ENCODE measurements at regions of chr16 and their contacts with region 1.

Region 1: DNA sequence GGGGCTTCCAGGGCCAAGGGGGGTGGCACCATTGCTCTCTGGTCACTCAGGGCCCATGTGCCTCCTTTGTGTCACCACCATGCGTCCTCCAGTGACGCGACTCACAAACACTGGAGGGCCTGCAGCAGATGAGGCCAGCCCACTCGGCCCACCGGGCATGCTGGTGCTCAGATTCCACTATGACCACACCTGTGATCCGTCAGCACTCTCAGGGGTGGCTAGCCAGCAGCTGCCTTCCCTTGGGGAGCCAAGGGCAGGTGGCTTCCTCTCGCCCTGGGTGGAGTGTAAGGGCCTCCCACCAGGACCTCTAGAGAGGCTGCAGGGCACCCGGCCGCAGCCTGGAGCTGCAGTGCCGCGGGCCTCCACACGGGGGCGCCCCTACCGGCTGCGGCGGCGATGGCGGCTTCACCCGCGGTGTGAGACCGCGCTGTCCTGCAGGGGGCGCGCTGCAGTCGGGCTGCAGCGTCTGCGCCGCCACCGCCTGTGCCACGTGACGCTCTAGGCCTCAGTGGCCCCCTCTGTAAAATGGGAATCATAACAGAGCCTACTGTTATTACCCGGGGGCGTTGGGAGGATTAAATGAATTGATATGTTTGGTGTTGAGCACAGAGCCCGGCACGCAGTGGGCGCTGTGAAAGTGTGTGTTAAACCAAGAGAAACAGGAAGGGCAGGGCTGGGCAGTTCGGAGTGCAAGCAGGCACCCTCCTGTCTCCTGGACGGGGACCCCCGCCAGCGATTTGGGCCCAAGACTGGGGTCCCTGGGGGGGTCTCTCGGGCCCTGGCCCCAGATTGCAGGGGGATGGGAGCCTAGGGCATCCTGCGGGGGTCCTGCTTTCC is 192.4 kb upstream of the GSE1 start:
- DNase-seq: peak; percentile 71 to 85
- ATAC-seq: peak; percentile 68 to 80 (median 78)
- H3K4me3 ChIP-seq: no peak overlapping the region
- H3K27ac ChIP-seq: no peak overlapping the region
- H3K4me1 ChIP-seq: peaks cover 6% of the 10 kb centered on the region
- H3K27me3 ChIP-seq: no peaks in the 10 kb centered on the region
- CTCF ChIP-seq: peak; percentile 99

Region 2: DNA sequence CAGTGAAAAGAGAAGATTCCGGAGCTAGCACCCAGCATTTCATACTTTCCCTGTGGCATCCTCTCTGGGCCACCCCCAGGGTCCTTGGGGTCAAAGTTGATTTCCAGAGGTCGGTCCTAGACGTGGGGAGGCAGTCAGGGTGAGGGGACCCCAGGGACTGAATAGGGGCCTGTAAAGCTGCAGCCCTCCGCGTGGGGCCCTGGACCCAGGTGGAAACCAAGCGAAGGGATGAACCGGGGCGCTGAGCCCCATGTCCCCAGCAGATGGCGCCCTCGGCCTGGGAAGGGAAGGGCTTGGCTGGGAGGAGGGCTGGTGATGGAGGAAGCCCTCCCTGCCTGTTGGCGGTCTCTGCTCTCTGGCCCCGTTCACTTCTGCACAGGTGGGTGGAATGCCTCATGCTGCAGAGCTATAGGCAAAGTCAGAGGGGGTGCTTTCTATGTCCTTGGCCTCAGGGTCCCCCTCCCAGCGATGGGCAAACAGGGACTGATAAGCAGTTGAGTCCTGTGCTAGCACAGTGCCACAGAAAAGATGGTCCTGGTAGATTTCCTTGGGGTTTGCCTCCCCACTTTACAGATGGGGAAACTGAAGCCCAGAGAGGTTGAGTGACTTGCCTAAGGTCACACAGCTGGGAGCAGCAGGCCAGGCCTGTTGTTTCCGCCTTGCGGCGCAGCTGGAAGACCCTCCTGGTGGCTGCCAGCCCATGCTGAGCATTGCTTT is 145.0 kb before region 1 on chr16:
- intact Hi-C with region 1: loop called in 1 of 2 experiments (anchors 10 kb)
- DNase-seq: peak; percentile 76 to 87
- ATAC-seq: peak; percentile 77 to 88 (median 78)
- H3K4me3 ChIP-seq: no peak overlapping the region
- H3K27ac ChIP-seq: no peak overlapping the region
- H3K4me1 ChIP-seq: peaks cover 21% of the 10 kb centered on the region
- H3K27me3 ChIP-seq: no peaks in the 10 kb centered on the region
- CTCF ChIP-seq: peak; percentile 89

Region 3: GRCh38 chr16:85465968-85466700 is 45.4 kb after region 1 on chr16:
- intact Hi-C with region 1: loop called (anchors 5 kb)
- DNase-seq: peak; percentile 77 to 93
- ATAC-seq: peak; percentile 79 to 85 (median 82)
- H3K4me3 ChIP-seq: no peak overlapping the region
- H3K27ac ChIP-seq: peak overlapping the region; percentile 70
- H3K4me1 ChIP-seq: peaks cover 36% of the 10 kb centered on the region
- H3K27me3 ChIP-seq: no peaks in the 10 kb centered on the region
- CTCF ChIP-seq: no peak

Region 4: GRCh38 chr16:85473909-85474620 is 53.3 kb after region 1 on chr16:
- intact Hi-C with region 1: loop called (anchors 5 kb)
- DNase-seq: peak; percentile 44 to 73
- ATAC-seq: peak; percentile 83 to 92 (median 84)
- H3K4me3 ChIP-seq: no peak overlapping the region
- H3K27ac ChIP-seq: peak overlapping the region; percentile 60
- H3K4me1 ChIP-seq: peaks cover 34% of the 10 kb centered on the region
- H3K27me3 ChIP-seq: no peaks in the 10 kb centered on the region
- CTCF ChIP-seq: peak; percentile 13

Region 5: DNA sequence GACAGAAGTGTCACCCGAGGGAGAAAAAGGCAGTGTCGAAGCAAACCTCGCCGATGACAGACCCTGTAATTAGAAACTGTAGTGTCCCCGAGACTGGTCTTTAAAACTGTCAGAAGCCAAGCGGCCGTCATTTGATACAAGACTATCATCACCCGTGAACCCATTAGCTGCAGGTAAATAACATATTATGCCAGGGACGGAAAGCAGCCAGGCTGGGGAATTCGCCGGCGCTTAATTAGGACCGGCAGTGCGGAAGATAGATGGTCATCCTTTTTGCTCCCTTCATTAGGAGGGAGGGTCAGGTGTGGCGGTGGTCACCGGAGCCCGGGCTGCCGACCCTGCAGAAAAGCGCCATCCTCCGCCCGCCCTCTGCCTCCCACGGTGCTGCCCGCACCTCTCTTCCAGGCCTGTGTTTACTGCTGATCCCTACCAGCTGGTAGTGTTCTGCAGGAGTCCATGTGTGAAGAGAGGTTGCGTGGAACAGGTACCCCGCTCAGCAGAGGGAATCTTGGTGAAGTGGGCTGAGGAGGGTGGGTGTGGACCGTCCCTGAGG is 83.0 kb after region 1 on chr16:
- intact Hi-C with region 1: loop called in 1 of 2 experiments (anchors 5 kb)
- DNase-seq: no peak
- ATAC-seq: peak in 3 of 4 donors; percentile 8 to 31 (median 20)
- H3K4me3 ChIP-seq: no peak overlapping the region
- H3K27ac ChIP-seq: peak overlapping the region; percentile 50
- H3K4me1 ChIP-seq: peaks cover 33% of the 10 kb centered on the region
- H3K27me3 ChIP-seq: no peaks in the 10 kb centered on the region
- CTCF ChIP-seq: no peak

Region 6: GRCh38 chr16:85564277-85565051 is 143.7 kb after region 1 on chr16:
- intact Hi-C with region 1: loop called in 1 of 2 experiments (anchors 5 kb)
- DNase-seq: peak; percentile 63 to 87
- ATAC-seq: peak; percentile 85 to 93 (median 90)
- H3K4me3 ChIP-seq: no peak overlapping the region
- H3K27ac ChIP-seq: peak overlapping the region; percentile 73
- H3K4me1 ChIP-seq: peaks cover 39% of the 10 kb centered on the region
- H3K27me3 ChIP-seq: no peaks in the 10 kb centered on the region
- CTCF ChIP-seq: peak; percentile 80

Region 7: GRCh38 chr16:85610508-85611332 is 190.0 kb after region 1 on chr16:
- intact Hi-C with region 1: loop called (anchors 2 kb)
- DNase-seq: peak; percentile 92 to 95
- ATAC-seq: peak; percentile 48 to 66 (median 51)
- H3K4me3 ChIP-seq: peak overlapping the region; percentile 79
- H3K27ac ChIP-seq: peak overlapping the region; percentile 99
- H3K4me1 ChIP-seq: peaks cover 47% of the 10 kb centered on the region
- H3K27me3 ChIP-seq: no peaks in the 10 kb centered on the region
- CTCF ChIP-seq: peak; percentile 99